K562 (cell line): ENCODE measurements at regions of chr12 and their contacts with region 1.

Region 1: GRCh38 chr12:6383572-6384498 is at the start of gene LTBR:
- DNase-seq: peak; percentile 82 to 87 (median 83)
- ATAC-seq: peak; percentile 95
- H3K4me3 ChIP-seq: peak within 1 kb of the TSS; percentile 74
- H3K27ac ChIP-seq: peak within 1 kb of the TSS; percentile 94
- H3K4me1 ChIP-seq: peaks cover 10 to 35% of the 10 kb centered on the region in 2 experiments; a peak in 4 of 5 replicates
- H3K27me3 ChIP-seq: no peaks in the 10 kb centered on the region
- CTCF ChIP-seq: peak in 1 of 3 experiments; percentile 14; a peak in 2 of 6 replicates
- EP300 ChIP-seq: no peak
- POLR2A ChIP-seq: peak; percentile 77
- RAD21 ChIP-seq: peak in 1 of 2 experiments; percentile 18; a peak in 1 of 4 replicates
- polyA plus RNA-seq, gene LTBR: 0.96 to 1.7 TPM

Region 2: DNA sequence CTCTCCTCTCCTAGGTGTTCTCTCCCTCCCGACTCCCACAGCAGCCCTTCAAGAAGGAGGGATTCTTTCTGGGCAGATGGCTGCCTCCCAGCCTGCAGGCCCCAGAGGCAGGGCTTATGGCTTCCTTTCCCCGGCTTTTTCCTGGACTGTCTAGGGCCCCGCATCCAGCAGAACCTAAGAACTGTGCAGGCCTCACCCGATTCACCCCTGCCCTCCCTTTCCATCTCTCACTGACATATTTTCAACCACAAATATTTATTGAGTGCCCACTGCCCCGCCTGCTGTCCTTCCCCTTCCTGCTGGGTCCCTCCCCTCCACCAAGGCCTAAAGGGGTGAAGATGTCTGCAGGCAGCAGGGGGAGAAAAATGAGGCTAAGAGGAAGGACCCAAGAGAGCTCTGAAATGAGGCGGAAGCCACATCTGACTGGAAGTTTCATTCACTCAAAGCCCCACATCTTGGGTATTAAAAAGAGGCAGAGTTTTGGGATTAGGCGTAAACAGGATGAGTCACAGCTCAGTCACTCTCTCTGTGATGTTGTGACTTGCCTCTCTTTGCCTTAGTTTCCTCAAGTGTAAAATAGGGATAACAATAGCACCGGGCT is 11.3 kb before region 1 on chr12:
- CTCF ChIA-PET with region 1: no interaction called
- POLR2A ChIA-PET with region 1: interaction called, 15 read pairs
- in situ Hi-C with region 1: no loop called
- intact Hi-C with region 1: no loop called
- DNase-seq: no peak
- ATAC-seq: no peak
- H3K4me3 ChIP-seq: no peak overlapping the region
- H3K27ac ChIP-seq: peak overlapping the region; percentile 56; the same call in 1 of the 3 replicates
- H3K4me1 ChIP-seq: peaks cover 44 to 52% of the 10 kb centered on the region in 2 experiments; a peak in 4 of 5 replicates
- H3K27me3 ChIP-seq: no peaks in the 10 kb centered on the region
- CTCF ChIP-seq: no peak
- EP300 ChIP-seq: no peak
- POLR2A ChIP-seq: no peak
- RAD21 ChIP-seq: no peak